Sigmoid colon (tissue), 7 donors: ENCODE measurements at regions of chr9 and their contacts with region 1.

Region 1: DNA sequence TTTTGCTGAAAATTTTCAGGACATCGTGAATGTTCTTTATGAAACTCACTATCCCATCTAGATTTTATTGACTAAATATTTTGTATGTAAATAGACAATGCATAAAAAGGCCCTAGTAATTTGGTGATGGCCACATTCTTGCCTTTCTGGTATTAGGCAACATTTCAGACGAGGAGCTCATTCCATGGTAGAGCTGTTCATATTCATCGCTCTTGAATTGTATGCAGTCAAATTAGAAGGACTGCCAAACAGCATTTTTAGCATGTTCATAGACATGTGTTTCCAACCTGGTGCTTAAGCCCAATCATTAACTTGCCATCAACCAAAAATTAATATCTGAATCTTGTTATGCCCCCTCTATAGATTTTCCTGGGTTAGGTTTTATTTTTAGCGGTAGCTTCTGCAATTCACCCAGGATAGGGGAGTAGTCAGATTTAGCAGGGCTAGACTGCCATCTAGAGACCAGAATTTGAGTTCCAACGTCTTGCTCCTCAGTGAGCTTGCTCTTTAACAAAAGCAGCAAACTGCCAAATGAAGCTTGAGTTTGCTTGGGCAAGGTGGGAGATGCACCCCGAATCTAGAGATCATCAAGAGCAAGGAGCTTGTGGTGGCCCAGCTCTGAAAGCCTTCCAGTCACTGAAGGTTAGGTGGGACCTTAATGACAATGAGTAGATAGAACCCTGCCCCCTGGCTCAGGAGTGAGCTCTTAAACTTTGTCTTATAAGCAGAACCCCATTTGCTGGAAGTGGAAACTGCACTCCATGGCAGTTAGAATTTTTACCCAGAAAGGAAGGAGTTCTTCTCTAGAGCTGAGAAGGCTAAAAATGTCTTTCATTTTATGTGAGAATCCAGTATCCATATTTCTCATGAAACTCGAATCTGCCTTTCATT is 456.2 kb downstream of the RASEF start:
- DNase-seq: peak; percentile 67
- H3K4me3 ChIP-seq: no peak overlapping the region
- H3K27ac ChIP-seq: peak overlapping the region in 2 of 4 donors; percentile 17 to 43
- H3K4me1 ChIP-seq: peaks cover 0 to 25% (median 19%) of the 10 kb centered on the region in 4 donors
- H3K27me3 ChIP-seq: no peaks in the 10 kb centered on the region
- CTCF ChIP-seq: peak; percentile 38 to 60 (median 52)
- EP300 ChIP-seq: no peak
- POLR2A ChIP-seq: no peak

Region 2: DNA sequence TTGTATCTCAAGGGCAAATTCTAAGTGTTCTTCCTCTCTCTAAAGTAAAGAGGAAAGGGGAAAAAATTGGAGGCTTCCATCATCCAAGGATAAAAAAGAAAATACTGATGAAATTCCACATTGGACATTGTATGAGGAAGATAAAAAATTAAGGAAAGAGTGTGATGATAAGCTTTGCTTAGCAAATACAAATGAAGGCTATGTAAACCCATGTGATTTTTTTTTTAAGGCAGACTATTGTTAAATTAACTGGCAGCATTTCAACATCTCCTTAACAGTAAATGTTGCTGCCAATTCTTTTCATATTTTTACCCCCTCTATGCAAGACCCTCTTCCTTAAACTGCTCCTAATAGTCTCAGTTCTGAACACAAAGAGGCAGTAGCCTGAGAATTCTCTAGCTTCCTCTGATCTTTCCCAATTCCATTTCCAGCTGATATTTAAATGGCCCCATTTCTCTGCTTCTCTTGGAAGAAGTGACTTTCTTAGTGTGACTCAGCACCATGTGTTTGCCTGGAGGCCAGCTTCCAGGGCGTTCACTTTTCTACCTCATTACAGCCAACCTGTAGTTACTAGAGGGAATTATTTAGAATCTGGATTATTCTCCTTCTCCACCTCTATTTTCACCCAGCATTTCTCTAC is 1077.1 kb before region 1 on chr9:
- intact Hi-C with region 1: loop called (anchors 10 kb)
- DNase-seq: peak; percentile 70
- H3K4me3 ChIP-seq: no peak overlapping the region
- H3K27ac ChIP-seq: peak overlapping the region in 1 of 4 donors; percentile 21
- H3K4me1 ChIP-seq: no peaks in the 10 kb centered on the region
- H3K27me3 ChIP-seq: no peaks in the 10 kb centered on the region
- CTCF ChIP-seq: no peak
- EP300 ChIP-seq: no peak
- POLR2A ChIP-seq: no peak

Region 3: DNA sequence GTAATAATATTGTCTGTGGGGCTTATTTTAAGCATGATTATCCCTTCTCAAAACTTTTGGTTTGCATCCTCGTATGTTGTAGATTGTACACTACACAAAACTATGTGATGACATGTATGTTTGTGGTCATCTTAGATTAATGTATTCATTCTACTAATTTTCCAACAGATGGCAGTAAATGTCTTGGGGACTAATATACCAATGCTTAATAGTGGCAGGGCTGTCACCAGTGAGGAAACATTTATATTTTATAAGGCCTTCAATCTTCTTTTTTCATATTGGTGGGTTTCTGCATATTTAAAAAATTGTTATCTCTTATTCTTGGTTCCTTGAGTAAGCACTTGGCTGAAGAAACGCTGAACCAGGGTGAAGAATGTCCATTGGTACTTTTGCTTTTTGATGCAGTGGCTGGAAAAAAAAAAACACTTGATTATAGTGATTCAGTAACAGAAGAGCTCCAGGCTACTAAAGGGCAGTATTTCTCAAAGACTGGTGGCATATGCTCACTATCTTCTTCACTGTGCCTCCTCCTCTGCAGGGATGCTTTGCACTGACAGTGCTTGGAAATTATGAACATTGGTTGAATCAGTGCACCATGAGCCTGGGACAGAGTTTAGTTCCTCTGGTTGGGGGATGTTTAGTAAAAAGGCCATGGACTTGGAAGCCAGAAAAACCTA is 74.1 kb before region 1 on chr9:
- intact Hi-C with region 1: loop called (anchors 5 kb)
- DNase-seq: no peak
- H3K4me3 ChIP-seq: no peak overlapping the region
- H3K27ac ChIP-seq: no peak overlapping the region
- H3K4me1 ChIP-seq: no peaks in the 10 kb centered on the region
- H3K27me3 ChIP-seq: no peaks in the 10 kb centered on the region
- CTCF ChIP-seq: peak in 2 of 4 experiments; percentile 22 to 34
- EP300 ChIP-seq: no peak
- POLR2A ChIP-seq: no peak

Region 4: GRCh38 chr9:83266666-83267496 is 660.1 kb after region 1 on chr9:
- intact Hi-C with region 1: no loop called
- DNase-seq: no peak
- H3K4me3 ChIP-seq: no peak overlapping the region
- H3K27ac ChIP-seq: no peak overlapping the region
- H3K4me1 ChIP-seq: peaks cover 0 to 15% (median 12%) of the 10 kb centered on the region in 4 donors
- H3K27me3 ChIP-seq: no peaks in the 10 kb centered on the region
- CTCF ChIP-seq: no peak
- EP300 ChIP-seq: no peak
- POLR2A ChIP-seq: no peak